ENCODE measurements at regions of chr5 and their contacts with region 1.

Region 1: DNA sequence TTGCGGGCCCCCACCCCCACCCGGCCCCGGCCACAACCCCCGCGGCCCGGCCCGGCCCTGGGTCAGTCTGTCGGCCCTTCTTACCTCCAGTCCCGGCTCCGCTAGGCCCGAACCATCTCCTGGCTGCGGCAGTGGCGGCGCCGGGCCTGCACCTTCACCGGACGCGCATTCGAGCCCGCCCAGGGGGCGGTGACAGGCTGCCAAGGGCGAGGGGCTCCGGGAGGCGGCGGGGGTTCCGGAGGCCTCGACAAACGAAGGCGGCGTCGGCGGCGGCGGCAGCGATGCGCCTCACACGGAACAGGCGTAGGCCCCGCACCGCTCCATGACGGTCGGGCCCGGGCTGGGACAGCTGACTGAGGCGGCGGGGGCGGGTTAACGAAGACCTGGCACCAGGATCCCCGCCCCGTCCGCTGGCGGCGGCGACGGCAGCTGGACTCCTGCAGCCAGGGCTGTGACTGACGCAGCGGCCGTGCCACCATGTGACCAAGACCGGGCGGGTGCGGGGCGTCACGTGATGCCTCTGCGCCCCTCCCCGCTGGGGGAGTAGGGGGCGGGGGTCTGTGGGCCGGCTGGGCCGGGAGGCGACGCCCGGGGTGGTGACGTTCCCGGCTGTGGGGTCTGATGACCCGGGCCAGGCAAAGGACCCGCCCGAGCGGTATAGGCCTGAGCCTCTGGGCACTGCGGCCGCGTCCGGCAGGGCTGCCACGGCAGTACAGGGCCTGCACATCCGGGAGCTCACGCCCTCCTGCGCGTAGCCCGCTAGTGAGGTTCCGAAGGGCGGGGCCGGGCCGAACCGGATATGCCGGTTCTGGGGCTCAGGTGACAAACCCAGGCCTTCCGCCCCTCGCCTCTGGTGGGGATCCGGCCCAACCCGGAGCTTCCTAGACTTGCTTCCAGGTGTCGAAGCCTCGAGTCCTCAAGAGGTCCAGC is at the start of gene AFF4:
- DNase-seq: peak; percentile 86 to 97
- H3K4me3 ChIP-seq: peak within 1 kb of the TSS; percentile 80
- H3K27ac ChIP-seq: peak within 1 kb of the TSS; percentile 82
- H3K4me1 ChIP-seq: peaks cover 23% of the 10 kb centered on the region
- H3K27me3 ChIP-seq: no peaks in the 10 kb centered on the region
- CTCF ChIP-seq: no peak
- total RNA-seq, gene AFF4: 59.5 and 64.5 TPM in 2 replicates

Region 2: GRCh38 chr5:133025804-133026663 is 62.6 kb after region 1 on chr5 and contains the start of gene ZCCHC10:
- CTCF ChIA-PET with region 1: no interaction called
- POLR2A ChIA-PET with region 1: no interaction called
- intact Hi-C with region 1: loop called (anchors 2 kb)
- DNase-seq: peak; percentile 84 to 90
- H3K4me3 ChIP-seq: peak within 1 kb of the TSS; percentile 80
- H3K27ac ChIP-seq: peak within 1 kb of the TSS; percentile 62
- H3K4me1 ChIP-seq: peaks cover 13% of the 10 kb centered on the region; the same call in 1 of the 2 replicates
- H3K27me3 ChIP-seq: no peaks in the 10 kb centered on the region
- CTCF ChIP-seq: no peak
- total RNA-seq, gene ZCCHC10: 8.3 and 14.9 TPM in 2 replicates

Region 3: GRCh38 chr5:133051580-133052332 is 88.3 kb after region 1 on chr5 and contains the start of gene HSPA4:
- CTCF ChIA-PET with region 1: no interaction called
- POLR2A ChIA-PET with region 1: interaction called, 3 read pairs
- intact Hi-C with region 1: loop called (anchors 2 kb)
- DNase-seq: peak; percentile 93 to 95
- H3K4me3 ChIP-seq: peak within 1 kb of the TSS; percentile 71
- H3K27ac ChIP-seq: peak within 1 kb of the TSS; percentile 94
- H3K4me1 ChIP-seq: peaks cover 45% of the 10 kb centered on the region
- H3K27me3 ChIP-seq: no peaks in the 10 kb centered on the region
- CTCF ChIP-seq: no peak
- total RNA-seq, gene HSPA4: 105 and 140 TPM in 2 replicates